Activated CD8-positive, alpha-beta memory T cell treated with anti-CD3 and anti-CD28 coated beads, Interleukin-2, amount 10 ng/mL, durations not matched to agents 7 days and 5 days (primary cell): ENCODE measurements at regions of chr11 and their contacts with region 1.

Region 1: GRCh38 chr11:66386171-66387069 is 14.9 kb upstream of the SLC29A2 start:
- DNase-seq: peak; percentile 90
- ATAC-seq: peak; percentile 79
- H3K4me3 Mint-ChIP-seq: peak overlapping the region; percentile 16
- H3K27ac Mint-ChIP-seq: no peak overlapping the region
- H3K4me1 Mint-ChIP-seq: peaks cover 7% of the 10 kb centered on the region
- H3K27me3 Mint-ChIP-seq: peaks cover 15% of the 10 kb centered on the region

Region 2: GRCh38 chr11:66344550-66345315 is 41.7 kb before region 1 on chr11 and contains the start of gene BRMS1:
- CTCF ChIA-PET with region 1: interaction called, 70 read pairs
- DNase-seq: peak; percentile 99
- ATAC-seq: peak; percentile 81
- H3K4me3 Mint-ChIP-seq: peak within 1 kb of the TSS; percentile 95
- H3K27ac Mint-ChIP-seq: peak within 1 kb of the TSS; percentile 95
- H3K4me1 Mint-ChIP-seq: peaks cover 47% of the 10 kb centered on the region
- H3K27me3 Mint-ChIP-seq: no peaks in the 10 kb centered on the region
- total RNA-seq, gene BRMS1: 55.3 to 56.8 TPM

Region 3: DNA sequence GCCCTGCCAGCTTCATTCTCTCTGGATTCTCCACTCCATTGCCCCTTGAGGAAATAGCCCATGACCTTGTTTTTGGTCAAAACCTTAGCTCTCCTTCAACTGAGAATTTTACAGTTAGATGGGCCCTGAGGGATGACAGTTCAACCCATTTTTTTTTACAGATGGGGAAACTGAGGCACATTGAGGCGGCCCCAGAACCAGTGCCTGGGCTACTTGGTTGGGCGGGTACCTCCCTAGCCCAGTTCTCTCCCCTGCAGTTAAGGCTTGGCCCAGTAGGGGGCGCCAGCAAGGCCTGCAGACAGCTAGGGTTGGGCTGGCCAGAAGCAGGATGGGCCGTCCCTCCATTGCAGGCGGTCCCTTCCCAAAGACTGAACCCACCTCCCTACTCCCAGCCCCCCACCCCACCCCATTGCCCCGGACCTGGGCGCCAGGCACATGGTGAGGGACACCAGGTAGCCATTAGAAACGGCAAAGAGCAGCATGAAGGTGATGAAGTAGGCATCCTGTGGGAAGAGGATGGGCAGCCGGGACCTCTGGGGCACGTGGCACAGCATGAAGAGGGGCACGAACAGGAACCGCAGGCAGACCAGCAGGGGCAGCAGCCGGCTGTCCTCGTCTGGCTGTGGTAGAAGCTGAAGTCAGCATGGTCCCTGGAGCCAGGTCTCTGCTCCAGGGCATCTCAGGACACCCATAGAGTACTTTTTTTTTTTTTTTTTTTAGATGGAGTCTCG is 22.4 kb before region 1 on chr11:
- CTCF ChIA-PET with region 1: interaction called, 28 read pairs
- DNase-seq: peak; percentile 77
- ATAC-seq: peak; percentile 54
- H3K4me3 Mint-ChIP-seq: no peak overlapping the region
- H3K27ac Mint-ChIP-seq: no peak overlapping the region
- H3K4me1 Mint-ChIP-seq: no peaks in the 10 kb centered on the region
- H3K27me3 Mint-ChIP-seq: no peaks in the 10 kb centered on the region

Region 4: DNA sequence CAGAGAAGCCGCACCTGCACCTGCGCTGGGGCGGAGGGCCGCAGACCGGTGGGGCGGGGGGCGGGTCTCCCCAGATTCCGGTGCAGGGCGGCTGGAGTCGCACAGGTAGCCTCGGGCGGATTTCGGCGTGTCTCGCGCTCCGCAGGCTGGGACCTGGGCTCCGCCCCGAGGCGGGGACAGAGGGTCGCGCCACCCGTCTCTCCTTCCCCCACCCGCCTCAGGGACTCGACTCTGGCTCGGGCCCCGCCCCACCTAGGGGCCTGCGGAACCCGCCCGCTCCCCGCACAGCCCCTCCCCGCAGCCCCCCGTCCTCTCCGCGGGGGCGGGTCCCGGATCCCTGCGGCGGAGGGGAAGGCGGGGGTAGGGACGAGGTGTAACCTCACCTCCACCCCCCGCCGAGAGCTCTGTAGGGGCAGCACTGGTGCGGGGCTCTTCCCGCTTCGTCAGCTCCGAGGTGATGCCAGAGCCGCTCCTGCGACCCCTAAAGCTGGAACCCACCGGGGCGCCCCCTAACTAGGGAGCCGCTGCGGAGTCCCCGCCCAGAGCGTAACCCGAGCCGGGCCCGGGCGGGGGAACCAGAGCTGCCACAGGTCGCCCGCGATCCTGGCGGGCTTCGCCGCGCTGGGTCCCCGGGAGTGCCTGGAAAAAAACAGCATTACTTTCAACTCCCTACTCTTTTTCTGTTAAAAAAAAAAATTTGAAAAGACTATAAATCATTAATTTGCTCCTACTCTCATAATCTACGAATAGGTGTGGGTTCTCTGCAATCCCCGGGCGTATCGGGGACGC is 14.6 kb before region 1 on chr11 and contains the start of gene SLC29A2:
- CTCF ChIA-PET with region 1: interaction called, 39 read pairs
- DNase-seq: peak; percentile 89
- ATAC-seq: peak; percentile 89
- H3K4me3 Mint-ChIP-seq: peak within 1 kb of the TSS; percentile 76
- H3K27ac Mint-ChIP-seq: peak within 1 kb of the TSS; percentile 92
- H3K4me1 Mint-ChIP-seq: peaks cover 19% of the 10 kb centered on the region
- H3K27me3 Mint-ChIP-seq: peaks cover 6% of the 10 kb centered on the region
- total RNA-seq, gene SLC29A2: 7.6 to 10.1 TPM

Region 5: DNA sequence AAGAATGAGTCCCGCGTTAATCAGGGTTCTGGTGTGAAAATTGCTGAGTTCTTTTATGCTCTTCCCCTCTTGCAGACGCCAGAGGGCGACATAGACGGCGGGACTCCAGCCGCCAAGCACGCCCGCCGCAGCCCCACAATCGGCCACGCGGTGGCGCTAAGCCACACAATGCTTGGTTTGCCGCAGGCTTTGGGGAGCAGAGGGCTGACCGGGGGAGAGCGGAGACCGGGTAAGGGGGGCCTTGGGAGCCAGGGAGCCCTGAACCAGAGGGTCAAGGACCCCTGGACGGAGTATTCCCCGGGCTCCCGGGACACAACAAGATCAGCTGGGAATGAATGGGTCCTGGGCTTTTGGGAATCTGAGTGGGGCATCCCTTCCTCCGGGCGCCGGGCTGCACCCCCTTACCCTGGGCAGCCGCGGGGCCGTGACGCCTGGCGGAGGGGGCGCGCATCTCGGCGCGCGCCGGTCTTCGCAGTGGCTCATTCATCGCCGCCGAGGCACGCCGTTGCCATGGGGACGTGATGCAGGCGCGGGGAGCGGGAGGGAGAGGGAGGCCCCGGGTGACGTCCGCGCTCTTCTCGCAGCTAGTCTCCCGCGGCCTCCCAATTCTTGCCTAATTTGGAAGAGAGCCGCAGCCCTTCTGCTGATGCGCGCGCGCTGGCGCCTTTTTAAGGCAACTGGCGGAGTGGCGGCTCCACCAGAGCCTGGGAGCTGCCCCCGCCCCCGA is 22.2 kb after region 1 on chr11:
- CTCF ChIA-PET with region 1: interaction called, 15 read pairs
- DNase-seq: peak; percentile 92
- ATAC-seq: peak; percentile 88
- H3K4me3 Mint-ChIP-seq: peak overlapping the region; percentile 63
- H3K27ac Mint-ChIP-seq: peak overlapping the region; percentile 34
- H3K4me1 Mint-ChIP-seq: peaks cover 3% of the 10 kb centered on the region
- H3K27me3 Mint-ChIP-seq: peaks cover 35% of the 10 kb centered on the region

Region 6: GRCh38 chr11:66438504-66439466 is 52.4 kb after region 1 on chr11 and contains the start of gene MRPL11:
- CTCF ChIA-PET with region 1: interaction called, 17 read pairs
- DNase-seq: peak; percentile 93
- ATAC-seq: peak; percentile 98
- H3K4me3 Mint-ChIP-seq: peak within 1 kb of the TSS; percentile 92
- H3K27ac Mint-ChIP-seq: peak within 1 kb of the TSS; percentile 92
- H3K4me1 Mint-ChIP-seq: peaks cover 21% of the 10 kb centered on the region
- H3K27me3 Mint-ChIP-seq: no peaks in the 10 kb centered on the region
- total RNA-seq, gene MRPL11: 75.5 to 91.3 TPM